Activated naive CD4-positive, alpha-beta T cell treated with anti-CD3 and anti-CD28 coated beads for 36 hours (primary cell): ENCODE measurements at regions of chr1 and their contacts with region 1.

Region 1: DNA sequence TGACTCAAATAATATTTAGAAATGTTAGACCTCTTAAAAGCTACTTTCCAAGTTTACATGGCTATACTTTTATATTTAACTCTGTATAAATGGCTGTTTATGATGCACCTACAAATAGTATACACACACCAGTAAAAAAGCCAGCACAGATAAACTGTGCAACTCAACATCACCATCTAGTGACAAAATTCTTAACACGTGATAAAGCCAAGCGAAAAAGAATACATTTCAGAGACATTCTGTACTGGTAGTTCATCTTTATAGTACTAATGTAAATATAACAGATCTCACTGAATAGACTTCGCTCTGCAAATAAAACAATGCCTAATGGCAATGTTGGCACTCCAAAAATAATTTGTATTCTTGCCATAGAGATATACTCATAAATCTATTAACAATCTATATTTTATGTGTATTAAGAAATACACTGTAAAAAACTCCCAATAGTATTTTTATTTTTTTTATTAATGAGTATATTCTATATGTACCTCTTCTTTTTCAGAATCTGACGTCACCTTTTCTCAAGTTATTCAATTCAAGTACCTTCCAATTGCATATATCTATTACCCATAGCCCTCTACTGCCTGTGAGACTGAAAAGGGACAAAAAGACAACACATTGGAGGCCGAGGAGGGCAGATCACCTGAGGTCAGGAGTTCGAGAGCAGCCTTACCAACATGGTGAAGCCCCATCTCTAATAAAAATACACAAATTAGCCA is 100.2 kb downstream of the DPYD start:
- DNase-seq: no peak
- H3K4me3 Mint-ChIP-seq: no peak overlapping the region
- H3K27ac Mint-ChIP-seq: no peak overlapping the region
- H3K4me1 Mint-ChIP-seq: no peaks in the 10 kb centered on the region
- H3K27me3 Mint-ChIP-seq: no peaks in the 10 kb centered on the region

Region 2: DNA sequence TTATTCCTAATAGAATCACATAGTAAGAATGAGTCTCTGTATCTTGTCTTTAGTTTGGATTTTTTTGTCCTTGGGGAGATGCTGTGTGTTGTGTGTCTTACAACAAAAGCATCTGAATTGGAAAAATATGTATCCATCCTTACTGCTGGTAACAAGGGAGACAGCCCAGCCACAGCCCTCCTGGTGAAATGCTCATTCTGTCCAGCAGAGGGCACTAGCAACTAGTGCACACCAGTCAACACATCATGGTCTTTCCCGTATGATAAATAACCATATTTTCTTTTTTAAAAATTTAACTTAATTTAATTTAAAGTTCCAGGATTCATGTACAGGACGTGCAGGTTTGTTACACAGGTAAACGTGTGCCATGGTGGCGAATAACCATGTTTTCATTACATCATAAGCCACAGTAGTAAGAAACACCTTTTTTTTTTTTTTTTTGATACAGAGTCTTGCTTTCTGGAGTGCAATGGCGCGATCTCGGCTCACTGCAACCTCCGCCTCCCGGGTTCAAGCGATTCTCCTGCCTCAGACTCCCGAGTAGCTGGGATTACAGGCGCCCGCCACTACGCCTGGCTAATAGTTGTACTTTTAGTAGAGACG is 854.0 kb before region 1 on chr1:
- CTCF ChIA-PET with region 1: no interaction called
- intact Hi-C with region 1: loop called (anchors 1 kb)
- DNase-seq: peak; percentile 87
- H3K4me3 Mint-ChIP-seq: no peak overlapping the region
- H3K27ac Mint-ChIP-seq: no peak overlapping the region
- H3K4me1 Mint-ChIP-seq: no peaks in the 10 kb centered on the region
- H3K27me3 Mint-ChIP-seq: peaks cover 31% of the 10 kb centered on the region

Region 3: GRCh38 chr1:97137862-97138514 is 682.6 kb before region 1 on chr1:
- CTCF ChIA-PET with region 1: interaction called, 3 read pairs
- intact Hi-C with region 1: loop called (anchors 1 kb)
- DNase-seq: peak; percentile 38
- H3K4me3 Mint-ChIP-seq: no peak overlapping the region
- H3K27ac Mint-ChIP-seq: no peak overlapping the region
- H3K4me1 Mint-ChIP-seq: no peaks in the 10 kb centered on the region
- H3K27me3 Mint-ChIP-seq: no peaks in the 10 kb centered on the region

Region 4: DNA sequence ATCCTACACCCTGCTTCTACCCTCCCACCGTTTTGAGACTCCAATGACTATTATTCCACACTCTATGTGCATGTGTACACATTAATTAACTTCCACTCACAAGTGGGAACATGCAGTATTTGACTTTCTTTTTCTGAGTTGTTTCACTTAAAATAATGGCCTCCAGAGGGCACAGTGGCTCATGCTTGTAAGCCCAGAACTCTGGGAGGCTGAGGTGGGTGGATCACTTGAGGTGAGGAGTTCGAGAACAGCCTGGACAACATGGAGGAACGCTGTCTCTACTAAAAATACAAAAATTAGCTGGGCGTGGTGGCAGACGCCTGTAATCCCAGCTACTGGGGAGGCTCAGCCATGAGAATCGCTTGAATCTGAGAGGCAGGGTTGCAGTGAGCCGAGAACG is 634.2 kb before region 1 on chr1:
- CTCF ChIA-PET with region 1: no interaction called
- intact Hi-C with region 1: loop called (anchors 5 kb)
- DNase-seq: peak; percentile 6
- H3K4me3 Mint-ChIP-seq: no peak overlapping the region
- H3K27ac Mint-ChIP-seq: no peak overlapping the region
- H3K4me1 Mint-ChIP-seq: no peaks in the 10 kb centered on the region
- H3K27me3 Mint-ChIP-seq: no peaks in the 10 kb centered on the region

Region 5: DNA sequence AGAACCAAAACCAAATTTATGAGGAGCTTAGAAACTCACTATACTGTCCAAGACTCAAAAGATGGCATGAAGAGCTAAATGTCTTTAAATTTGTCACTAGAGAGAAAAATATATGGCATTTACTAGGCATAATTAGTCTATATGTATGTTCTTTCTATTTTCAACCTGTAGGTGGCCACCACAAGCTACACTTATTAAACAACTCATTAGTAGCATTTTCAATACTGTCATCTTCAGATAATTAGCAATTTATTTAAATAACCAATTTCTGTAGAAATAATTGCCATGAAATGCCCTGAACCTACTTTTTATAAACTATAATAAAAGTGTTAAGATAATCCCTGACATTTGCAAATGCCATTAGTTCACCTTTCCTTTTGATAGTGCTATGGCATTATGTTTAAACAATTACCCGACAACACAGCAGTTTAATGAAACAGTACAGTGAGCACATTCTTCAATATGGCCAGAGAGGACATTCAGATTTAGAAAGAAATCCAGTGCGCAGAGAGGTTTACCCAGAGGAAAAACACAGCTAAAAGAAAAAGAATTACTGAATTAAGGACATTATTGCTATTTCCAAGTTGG is 576.6 kb before region 1 on chr1:
- CTCF ChIA-PET with region 1: interaction called, 4 read pairs
- intact Hi-C with region 1: loop called (anchors 2 kb)
- DNase-seq: no peak
- H3K4me3 Mint-ChIP-seq: no peak overlapping the region
- H3K27ac Mint-ChIP-seq: no peak overlapping the region
- H3K4me1 Mint-ChIP-seq: no peaks in the 10 kb centered on the region
- H3K27me3 Mint-ChIP-seq: no peaks in the 10 kb centered on the region

Region 6: GRCh38 chr1:97668945-97669344 is 151.7 kb before region 1 on chr1:
- CTCF ChIA-PET with region 1: interaction called, 3 read pairs
- intact Hi-C with region 1: loop called (anchors 1 kb)
- DNase-seq: peak; percentile 22
- H3K4me3 Mint-ChIP-seq: no peak overlapping the region
- H3K27ac Mint-ChIP-seq: no peak overlapping the region
- H3K4me1 Mint-ChIP-seq: no peaks in the 10 kb centered on the region
- H3K27me3 Mint-ChIP-seq: no peaks in the 10 kb centered on the region

Region 7: DNA sequence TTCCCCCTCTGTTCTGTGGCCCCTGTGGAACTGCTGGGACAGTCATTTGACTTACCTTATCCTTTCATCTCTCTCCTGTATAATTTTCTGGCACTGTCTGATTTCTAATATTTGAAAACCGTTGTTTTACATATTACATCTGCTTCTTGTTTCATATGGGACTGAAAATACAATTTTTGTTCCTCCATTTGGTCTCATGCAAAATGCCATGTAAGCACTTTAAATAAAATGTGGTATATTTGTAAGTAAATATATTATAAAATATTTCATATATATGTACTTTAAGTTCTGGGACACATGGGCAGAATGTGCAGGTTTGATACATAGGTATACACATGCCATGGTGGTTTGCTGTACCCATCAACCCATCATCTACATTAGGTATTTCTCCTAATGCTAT is 1278.0 kb after region 1 on chr1:
- CTCF ChIA-PET with region 1: no interaction called
- intact Hi-C with region 1: no loop called
- DNase-seq: no peak
- H3K4me3 Mint-ChIP-seq: no peak overlapping the region
- H3K27ac Mint-ChIP-seq: no peak overlapping the region
- H3K4me1 Mint-ChIP-seq: no peaks in the 10 kb centered on the region
- H3K27me3 Mint-ChIP-seq: peaks cover 7% of the 10 kb centered on the region